HEK293 (cell line): ENCODE measurements at regions of chr18 and their contacts with region 1.

Region 1: DNA sequence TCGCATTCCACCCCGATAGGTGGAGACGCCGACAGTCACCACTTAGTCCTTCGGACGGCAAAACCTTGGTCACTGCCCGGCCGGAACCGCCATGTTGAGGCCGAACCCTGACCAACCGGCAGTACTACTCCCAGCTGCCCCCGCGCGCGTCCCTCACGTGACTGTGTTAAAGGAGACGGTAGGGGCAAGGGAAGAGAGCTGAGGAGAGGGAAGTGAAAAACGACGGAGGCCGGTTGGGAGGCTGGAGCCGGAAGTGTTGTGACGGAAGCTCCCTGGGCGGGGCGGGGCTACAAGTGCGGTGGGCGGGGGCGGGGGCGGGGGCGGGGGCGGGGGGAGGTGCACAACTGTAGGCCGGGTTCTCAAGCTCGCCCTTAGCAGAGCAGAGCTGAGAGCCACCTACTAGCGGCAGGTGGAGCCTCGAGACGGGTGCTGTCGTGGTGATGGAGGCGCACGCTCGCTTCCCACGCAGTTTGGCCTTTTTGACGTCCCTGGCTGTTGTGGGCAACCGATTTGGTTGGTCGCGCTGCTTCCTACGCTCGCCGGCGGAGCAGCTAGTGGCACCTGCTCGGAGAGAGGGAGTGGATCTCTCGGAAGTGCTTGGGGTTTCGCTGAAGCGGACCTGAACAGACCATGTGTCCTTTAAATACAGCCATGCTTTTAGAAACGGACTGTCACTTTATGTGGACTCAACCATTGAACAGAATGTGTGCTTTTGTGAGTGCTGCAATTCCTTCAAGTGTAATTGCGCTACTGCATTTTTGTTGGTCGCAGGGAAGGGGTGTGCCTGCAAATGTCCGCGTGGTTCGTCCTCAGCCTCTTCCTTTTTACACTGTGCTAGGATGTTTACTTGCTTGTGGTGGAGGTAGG is at the start of gene TRAPPC8:
- H3K4me3 ChIP-seq: peak within 1 kb of the TSS; percentile 89
- H3K27ac ChIP-seq: peak within 1 kb of the TSS; percentile 81
- H3K4me1 ChIP-seq: no peaks in the 10 kb centered on the region
- CTCF ChIP-seq: peak; percentile 48; the same call in 1 of the 2 replicates

Region 2: DNA sequence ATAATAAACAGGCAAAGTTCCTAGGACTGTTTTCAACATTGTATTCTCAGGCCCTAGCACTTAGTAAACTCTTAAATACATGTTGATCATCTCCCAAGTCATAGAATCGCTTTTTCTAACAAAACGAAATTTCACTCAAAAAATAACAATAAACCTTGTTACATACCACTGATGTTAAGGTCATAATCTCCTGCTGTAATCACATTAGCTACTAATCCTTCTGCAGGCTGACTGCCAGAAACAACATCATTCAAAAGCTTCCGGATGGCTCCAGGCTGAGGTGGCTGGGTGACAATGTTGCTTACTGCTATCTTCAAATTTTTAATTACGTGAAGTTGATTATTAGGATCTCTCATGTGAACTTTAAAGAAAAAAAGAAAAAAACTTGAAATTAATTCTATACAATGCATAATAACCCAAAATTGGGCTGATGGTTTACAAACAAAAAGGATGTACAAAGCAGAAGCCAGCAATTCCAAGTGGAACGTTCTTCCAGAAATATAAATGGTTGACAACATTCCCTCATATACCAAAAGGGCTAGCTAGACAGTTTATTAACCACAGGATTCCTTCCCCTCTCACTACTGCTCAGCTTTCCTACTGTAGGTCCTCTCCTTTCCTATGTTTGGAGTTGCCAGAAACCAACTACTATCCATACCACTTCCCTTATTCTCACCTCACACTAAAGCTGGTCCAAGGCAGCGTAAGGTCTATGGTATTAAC is 11.9 kb before region 1 on chr18:
- CTCF ChIA-PET with region 1: interaction called, 9 read pairs
- POLR2A ChIA-PET with region 1: interaction called, 11 read pairs
- H3K4me3 ChIP-seq: no peak overlapping the region
- H3K27ac ChIP-seq: no peak overlapping the region
- H3K4me1 ChIP-seq: peaks cover 12% of the 10 kb centered on the region
- CTCF ChIP-seq: no peak

Region 3: GRCh38 chr18:31990823-31991222 is 47.6 kb after region 1 on chr18:
- CTCF ChIA-PET with region 1: no interaction called
- POLR2A ChIA-PET with region 1: no interaction called
- H3K4me3 ChIP-seq: no peak overlapping the region
- H3K27ac ChIP-seq: no peak overlapping the region
- H3K4me1 ChIP-seq: no peaks in the 10 kb centered on the region
- CTCF ChIP-seq: no peak

Region 4: DNA sequence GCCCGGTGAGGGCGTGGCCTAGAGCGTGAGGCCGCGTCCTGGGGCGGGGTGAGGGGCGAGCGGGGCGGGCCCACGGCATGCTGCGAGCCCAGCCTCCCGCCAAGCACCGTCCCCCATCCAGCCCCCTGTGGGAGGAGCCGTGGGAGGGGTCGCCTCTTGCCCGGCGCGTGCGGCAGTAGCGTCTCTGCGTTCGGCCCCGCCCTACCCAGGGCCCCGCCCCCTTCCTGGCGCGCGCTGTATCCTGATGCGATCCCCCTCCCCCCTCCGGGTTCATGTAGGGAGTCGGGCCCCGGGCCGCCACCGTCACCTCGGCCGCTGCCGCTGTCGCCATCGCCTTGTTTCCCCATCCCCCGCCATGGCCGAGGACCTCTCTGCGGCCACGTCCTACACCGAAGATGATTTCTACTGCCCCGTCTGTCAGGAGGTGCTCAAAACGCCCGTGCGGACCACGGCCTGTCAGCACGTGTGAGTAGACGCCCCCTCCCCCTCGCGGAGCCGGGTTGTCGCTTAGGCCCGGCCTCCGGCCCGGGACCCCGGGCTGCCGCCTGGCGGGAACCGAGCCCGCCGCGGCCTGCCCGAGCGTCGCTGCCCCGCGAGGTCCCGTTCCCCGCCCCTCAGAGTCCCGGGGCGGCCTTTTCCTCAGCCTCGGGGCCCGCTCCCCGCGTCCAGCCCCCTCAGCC is 149.3 kb after region 1 on chr18:
- CTCF ChIA-PET with region 1: no interaction called
- POLR2A ChIA-PET with region 1: interaction called, 10 read pairs
- H3K4me3 ChIP-seq: peak overlapping the region; percentile 90
- H3K27ac ChIP-seq: peak overlapping the region; percentile 97
- H3K4me1 ChIP-seq: peaks cover 4% of the 10 kb centered on the region; the same call in 1 of the 2 replicates
- CTCF ChIP-seq: no peak; the same call in 1 of the 2 replicates

Region 5: GRCh38 chr18:32208023-32208422 is 264.8 kb after region 1 on chr18:
- CTCF ChIA-PET with region 1: no interaction called
- POLR2A ChIA-PET with region 1: no interaction called
- H3K4me3 ChIP-seq: no peak overlapping the region
- H3K27ac ChIP-seq: no peak overlapping the region
- H3K4me1 ChIP-seq: peaks cover 15% of the 10 kb centered on the region
- CTCF ChIP-seq: no peak